ENCODE measurements at regions of chr2 and their contacts with region 1.

Region 1: GRCh38 chr2:119759451-119760236 is at the start of gene PTPN4:
- DNase-seq: peak; percentile 98
- ATAC-seq: peak; percentile 99
- H3K4me3 ChIP-seq: peak within 1 kb of the TSS; percentile 70 to 95
- H3K27ac ChIP-seq: peak within 1 kb of the TSS; percentile 12 to 29
- H3K4me1 ChIP-seq: peaks cover 0 to 6% of the 10 kb centered on the region in 2 donors
- H3K27me3 ChIP-seq: no peaks in the 10 kb centered on the region
- total RNA-seq, gene PTPN4: 20.4 to 39.0 TPM

Region 2: GRCh38 chr2:119713804-119714490 is 45.7 kb before region 1 on chr2:
- intact Hi-C with region 1: no loop called
- DNase-seq: no peak
- ATAC-seq: no peak
- H3K4me3 ChIP-seq: no peak overlapping the region
- H3K27ac ChIP-seq: no peak overlapping the region
- H3K4me1 ChIP-seq: no peaks in the 10 kb centered on the region
- H3K27me3 ChIP-seq: no peaks in the 10 kb centered on the region

Region 3: GRCh38 chr2:119795309-119796303 is 36.0 kb after region 1 on chr2:
- intact Hi-C with region 1: no loop called
- DNase-seq: no peak
- ATAC-seq: no peak
- H3K4me3 ChIP-seq: no peak overlapping the region
- H3K27ac ChIP-seq: no peak overlapping the region
- H3K4me1 ChIP-seq: no peaks in the 10 kb centered on the region
- H3K27me3 ChIP-seq: no peaks in the 10 kb centered on the region

Region 4: GRCh38 chr2:119823734-119824334 is 64.2 kb after region 1 on chr2:
- intact Hi-C with region 1: loop called (anchors 5 kb)
- DNase-seq: no peak
- ATAC-seq: no peak
- H3K4me3 ChIP-seq: no peak overlapping the region
- H3K27ac ChIP-seq: no peak overlapping the region
- H3K4me1 ChIP-seq: peaks cover 0 to 2% of the 10 kb centered on the region in 2 donors
- H3K27me3 ChIP-seq: no peaks in the 10 kb centered on the region

Region 5: GRCh38 chr2:120012771-120013596 is 253.3 kb after region 1 on chr2 and contains the start of gene EPB41L5:
- intact Hi-C with region 1: loop called in 1 of 2 experiments (anchors 10 kb)
- DNase-seq: peak; percentile 95 to 98
- ATAC-seq: peak; percentile 98
- H3K4me3 ChIP-seq: peak within 1 kb of the TSS; percentile 92 to 93
- H3K27ac ChIP-seq: peak within 1 kb of the TSS in 1 of 2 donors; percentile 84
- H3K4me1 ChIP-seq: no peaks in the 10 kb centered on the region
- H3K27me3 ChIP-seq: no peaks in the 10 kb centered on the region
- total RNA-seq, gene EPB41L5: 18.2 to 21.8 TPM